ENCODE measurements at regions of chr11 and their contacts with region 1.

Region 1: GRCh38 chr11:59615637-59616395 is at the start of gene OSBP:
- DNase-seq: peak; percentile 98 to 100 (median 100)
- H3K4me3 ChIP-seq: peak within 1 kb of the TSS; percentile 84 to 86
- H3K4me3 Mint-ChIP-seq: peak within 1 kb of the TSS; percentile 93 to 99 (median 96)
- H3K27ac ChIP-seq: peak within 1 kb of the TSS; percentile 95
- H3K27ac Mint-ChIP-seq: peak within 1 kb of the TSS; percentile 83 to 99 (median 98)
- H3K4me1 ChIP-seq: peaks cover 48% of the 10 kb centered on the region
- H3K4me1 Mint-ChIP-seq: peaks cover 29 to 53% (median 42%) of the 10 kb centered on the region in 4 donors
- H3K27me3 ChIP-seq: no peaks in the 10 kb centered on the region
- H3K27me3 Mint-ChIP-seq: no peaks in the 10 kb centered on the region
- total RNA-seq, gene OSBP: 55.3 to 55.6 TPM

Region 2: GRCh38 chr11:59401262-59401552 is 214.6 kb before region 1 on chr11:
- CTCF ChIA-PET with region 1: no interaction called
- POLR2A ChIA-PET with region 1: no interaction called
- intact Hi-C with region 1: no loop called
- DNase-seq: no peak
- H3K4me3 ChIP-seq: no peak overlapping the region
- H3K4me3 Mint-ChIP-seq: no peak overlapping the region
- H3K27ac ChIP-seq: no peak overlapping the region
- H3K27ac Mint-ChIP-seq: no peak overlapping the region
- H3K4me1 ChIP-seq: no peaks in the 10 kb centered on the region
- H3K4me1 Mint-ChIP-seq: no peaks in the 10 kb centered on the region
- H3K27me3 ChIP-seq: no peaks in the 10 kb centered on the region
- H3K27me3 Mint-ChIP-seq: peaks cover 3% of the 10 kb centered on the region in 2 donors

Region 3: GRCh38 chr11:59510940-59511589 is 104.8 kb before region 1 on chr11 and contains the start of gene OR4D9:
- CTCF ChIA-PET with region 1: no interaction called
- POLR2A ChIA-PET with region 1: no interaction called
- intact Hi-C with region 1: no loop called
- DNase-seq: peak in 1 of 5 donors; percentile 6
- H3K4me3 ChIP-seq: no peak within 1 kb of the TSS
- H3K4me3 Mint-ChIP-seq: peak within 1 kb of the TSS in 6 of 8 donors; percentile 10 to 42 (median 33)
- H3K27ac ChIP-seq: no peak within 1 kb of the TSS
- H3K27ac Mint-ChIP-seq: peak within 1 kb of the TSS in 1 of 7 donors; percentile 23
- H3K4me1 ChIP-seq: peaks cover 19% of the 10 kb centered on the region
- H3K4me1 Mint-ChIP-seq: peaks cover 10 to 26% (median 20%) of the 10 kb centered on the region in 4 donors
- H3K27me3 ChIP-seq: no peaks in the 10 kb centered on the region
- H3K27me3 Mint-ChIP-seq: peaks cover 0 to 6% of the 10 kb centered on the region in 2 donors
- total RNA-seq, gene OR4D9: not detected

Region 4: DNA sequence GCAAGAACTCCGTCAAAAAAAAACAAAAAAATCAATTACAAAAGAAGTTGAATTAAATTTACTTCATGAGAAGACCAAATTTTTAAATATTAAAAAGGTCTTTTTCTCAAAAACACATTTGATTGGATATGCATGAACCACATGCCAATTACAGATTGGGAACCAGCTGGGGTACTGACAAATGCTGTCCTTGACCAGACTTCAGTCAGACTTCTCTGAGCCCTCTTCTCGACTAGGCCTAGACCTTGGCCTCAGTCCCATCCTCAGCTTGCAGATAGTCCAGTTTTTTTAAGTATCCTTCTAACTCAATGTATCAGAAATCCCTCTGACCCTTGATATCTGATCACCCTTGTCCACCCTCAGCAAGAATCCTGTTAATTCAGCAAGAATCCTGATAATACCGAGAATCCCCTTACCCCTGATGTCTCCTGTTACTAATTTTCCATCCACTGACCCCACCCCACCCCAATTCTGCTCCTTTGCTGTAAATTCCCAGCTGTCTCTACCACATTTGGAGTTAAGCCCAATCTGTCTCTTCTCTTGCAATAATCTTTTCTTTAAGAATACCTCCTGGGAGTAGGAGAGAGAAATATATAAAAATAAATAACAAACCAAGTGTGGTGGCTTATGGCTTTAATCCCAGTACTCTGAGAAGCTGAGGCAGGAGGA is 73.5 kb before region 1 on chr11:
- CTCF ChIA-PET with region 1: interaction called, 6 read pairs
- POLR2A ChIA-PET with region 1: interaction called, 12 read pairs
- intact Hi-C with region 1: loop called (anchors 1 kb)
- DNase-seq: no peak
- H3K4me3 ChIP-seq: no peak overlapping the region
- H3K4me3 Mint-ChIP-seq: no peak overlapping the region
- H3K27ac ChIP-seq: no peak overlapping the region
- H3K27ac Mint-ChIP-seq: no peak overlapping the region
- H3K4me1 ChIP-seq: peaks cover 4% of the 10 kb centered on the region
- H3K4me1 Mint-ChIP-seq: peaks cover 4 to 9% (median 5%) of the 10 kb centered on the region in 4 donors
- H3K27me3 ChIP-seq: no peaks in the 10 kb centered on the region
- H3K27me3 Mint-ChIP-seq: no peaks in the 10 kb centered on the region

Region 5: DNA sequence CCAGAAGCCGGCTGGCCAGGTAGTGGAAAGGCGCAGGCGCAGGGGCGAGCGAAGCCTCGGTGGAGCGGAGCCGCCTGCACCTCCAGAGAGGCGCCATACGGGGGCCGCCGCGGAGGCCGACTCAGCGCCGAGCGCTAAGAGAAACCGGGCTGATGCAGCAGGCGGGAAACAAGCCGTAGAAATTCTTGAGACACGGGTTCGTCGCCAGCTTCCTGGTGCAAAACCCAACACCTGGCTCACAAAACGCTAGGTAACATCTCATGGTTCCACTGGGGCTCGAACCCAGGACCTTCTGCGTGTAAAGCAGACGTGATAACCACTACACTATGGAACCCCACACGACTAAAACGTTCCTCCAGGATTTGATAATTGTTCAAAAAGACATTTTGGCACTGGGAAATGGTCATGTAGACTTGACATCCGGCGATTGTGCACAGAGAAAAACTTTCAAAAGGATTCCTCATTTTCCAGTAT is 65.4 kb before region 1 on chr11:
- CTCF ChIA-PET with region 1: interaction called, 8 read pairs
- POLR2A ChIA-PET with region 1: interaction called, 36 read pairs
- intact Hi-C with region 1: loop called (anchors 1 kb)
- DNase-seq: peak; percentile 86 to 94 (median 87)
- H3K4me3 ChIP-seq: peak overlapping the region; percentile 19 to 61
- H3K4me3 Mint-ChIP-seq: peak overlapping the region; percentile 86 to 96 (median 88)
- H3K27ac ChIP-seq: peak overlapping the region; percentile 51
- H3K27ac Mint-ChIP-seq: peak overlapping the region; percentile 92 to 100 (median 94)
- H3K4me1 ChIP-seq: peaks cover 14% of the 10 kb centered on the region
- H3K4me1 Mint-ChIP-seq: peaks cover 16 to 52% (median 26%) of the 10 kb centered on the region in 4 donors
- H3K27me3 ChIP-seq: no peaks in the 10 kb centered on the region
- H3K27me3 Mint-ChIP-seq: peaks cover 0 to 9% of the 10 kb centered on the region in 2 donors

Region 6: DNA sequence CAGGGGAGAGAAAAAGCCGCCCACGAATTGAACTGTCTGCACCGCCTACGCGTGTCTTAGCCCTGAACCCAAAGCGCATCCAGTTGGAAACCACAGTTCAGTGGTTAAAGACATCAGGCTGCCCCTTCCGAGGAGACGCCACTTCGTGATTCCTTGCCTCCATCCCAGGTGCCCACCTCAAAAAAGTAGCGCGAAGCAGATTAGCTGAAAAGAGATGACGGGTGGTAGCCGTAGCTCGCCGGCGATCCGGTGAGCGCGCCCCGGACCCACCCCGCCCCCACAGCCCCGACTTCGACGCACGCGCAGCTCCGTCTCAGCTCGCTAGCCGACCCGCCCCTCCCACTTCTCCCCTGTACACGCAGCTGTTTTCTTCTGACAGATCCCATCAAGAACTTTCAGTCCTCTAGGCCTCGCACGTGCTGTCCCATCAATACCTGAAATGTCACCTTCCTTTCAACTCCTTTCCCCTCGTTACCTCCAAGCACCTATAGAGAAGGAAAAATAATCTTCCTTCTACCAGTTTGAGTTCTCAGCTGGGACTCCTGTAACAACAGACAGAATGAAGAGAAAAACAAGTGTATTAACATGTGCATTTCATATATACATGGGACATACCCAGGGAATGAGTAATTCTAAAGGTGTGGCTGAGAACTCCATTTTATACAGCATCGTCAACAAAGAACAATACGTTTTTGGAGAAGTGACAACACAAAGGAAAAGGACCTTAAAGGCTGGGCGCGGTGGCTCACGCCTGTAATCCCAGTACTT is 54.9 kb before region 1 on chr11:
- CTCF ChIA-PET with region 1: interaction called, 6 read pairs
- POLR2A ChIA-PET with region 1: interaction called, 61 read pairs
- intact Hi-C with region 1: loop called (anchors 1 kb)
- DNase-seq: peak; percentile 75 to 86 (median 77)
- H3K4me3 ChIP-seq: peak overlapping the region; percentile 83 to 87
- H3K4me3 Mint-ChIP-seq: peak overlapping the region; percentile 93 to 99 (median 96)
- H3K27ac ChIP-seq: peak overlapping the region; percentile 58
- H3K27ac Mint-ChIP-seq: peak overlapping the region; percentile 91 to 100 (median 98)
- H3K4me1 ChIP-seq: peaks cover 21% of the 10 kb centered on the region
- H3K4me1 Mint-ChIP-seq: peaks cover 27 to 53% (median 39%) of the 10 kb centered on the region in 4 donors
- H3K27me3 ChIP-seq: no peaks in the 10 kb centered on the region
- H3K27me3 Mint-ChIP-seq: peaks cover 2 to 5% of the 10 kb centered on the region in 2 donors

Region 7: GRCh38 chr11:59601788-59602187 is 14.0 kb before region 1 on chr11:
- CTCF ChIA-PET with region 1: no interaction called
- POLR2A ChIA-PET with region 1: interaction called, 25 read pairs
- intact Hi-C with region 1: no loop called
- DNase-seq: no peak
- H3K4me3 ChIP-seq: no peak overlapping the region
- H3K4me3 Mint-ChIP-seq: no peak overlapping the region
- H3K27ac ChIP-seq: no peak overlapping the region
- H3K27ac Mint-ChIP-seq: no peak overlapping the region
- H3K4me1 ChIP-seq: no peaks in the 10 kb centered on the region
- H3K4me1 Mint-ChIP-seq: peaks cover 9 to 33% (median 19%) of the 10 kb centered on the region in 4 donors
- H3K27me3 ChIP-seq: no peaks in the 10 kb centered on the region
- H3K27me3 Mint-ChIP-seq: no peaks in the 10 kb centered on the region

Region 8: GRCh38 chr11:59810189-59810910 is 194.5 kb after region 1 on chr11 and contains the start of gene MRPL16:
- CTCF ChIA-PET with region 1: no interaction called
- POLR2A ChIA-PET with region 1: interaction called, 8 read pairs
- intact Hi-C with region 1: loop called (anchors 2 kb)
- DNase-seq: peak; percentile 84 to 91 (median 86)
- H3K4me3 ChIP-seq: peak within 1 kb of the TSS; percentile 70 to 91
- H3K4me3 Mint-ChIP-seq: peak within 1 kb of the TSS; percentile 92 to 95 (median 93)
- H3K27ac ChIP-seq: peak within 1 kb of the TSS; percentile 71
- H3K27ac Mint-ChIP-seq: peak within 1 kb of the TSS; percentile 87 to 97 (median 91)
- H3K4me1 ChIP-seq: peaks cover 23% of the 10 kb centered on the region
- H3K4me1 Mint-ChIP-seq: peaks cover 14 to 32% (median 23%) of the 10 kb centered on the region in 4 donors
- H3K27me3 ChIP-seq: no peaks in the 10 kb centered on the region
- H3K27me3 Mint-ChIP-seq: peaks cover 0 to 2% of the 10 kb centered on the region in 2 donors
- total RNA-seq, gene MRPL16: 33.2 to 35.9 TPM

Measured in CD4-positive, alpha-beta memory T cell (primary cell).